ENCODE measurements at regions of chrX and their contacts with region 1.

Region 1: DNA sequence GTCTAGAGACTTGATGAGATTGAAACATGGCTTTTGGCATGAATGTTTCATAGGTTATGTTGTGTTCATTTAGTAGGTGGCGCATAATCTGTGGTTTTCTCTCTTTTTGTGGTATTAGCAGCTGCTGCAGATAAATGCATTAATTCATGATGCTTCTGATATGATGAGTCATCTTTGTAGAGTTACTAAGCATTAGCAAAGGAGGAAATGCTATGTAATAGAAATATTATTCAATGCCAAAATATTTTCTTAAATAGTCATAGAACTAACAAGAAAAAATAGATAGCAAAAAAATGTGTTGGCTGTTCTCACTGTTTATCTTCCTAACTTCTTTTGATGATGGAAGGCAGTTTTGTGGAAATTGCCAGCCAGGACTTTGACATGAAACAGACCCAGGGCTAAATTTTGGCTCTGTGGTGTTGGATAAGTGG is 3.6 kb downstream of the ZXDB start:
- DNase-seq: peak; percentile 30
- H3K4me3 Mint-ChIP-seq: peak overlapping the region; percentile 59
- H3K27ac Mint-ChIP-seq: no peak overlapping the region
- H3K4me1 Mint-ChIP-seq: peaks cover 30% of the 10 kb centered on the region
- H3K27me3 Mint-ChIP-seq: peaks cover 12% of the 10 kb centered on the region
- CTCF ChIP-seq: no peak

Region 2: GRCh38 chrX:57286507-57287251 is 308.7 kb before region 1 on chrX and contains the start of gene FAAH2:
- CTCF ChIA-PET with region 1: no interaction called
- POLR2A ChIA-PET with region 1: no interaction called
- intact Hi-C with region 1: loop called (anchors 10 kb)
- DNase-seq: peak; percentile 89
- H3K4me3 Mint-ChIP-seq: peak within 1 kb of the TSS; percentile 89
- H3K27ac Mint-ChIP-seq: peak within 1 kb of the TSS; percentile 89
- H3K4me1 Mint-ChIP-seq: peaks cover 16% of the 10 kb centered on the region
- H3K27me3 Mint-ChIP-seq: peaks cover 47% of the 10 kb centered on the region
- CTCF ChIP-seq: no peak
- total RNA-seq, gene FAAH2: 1.7 and 3.1 TPM in 2 replicates

Region 3: DNA sequence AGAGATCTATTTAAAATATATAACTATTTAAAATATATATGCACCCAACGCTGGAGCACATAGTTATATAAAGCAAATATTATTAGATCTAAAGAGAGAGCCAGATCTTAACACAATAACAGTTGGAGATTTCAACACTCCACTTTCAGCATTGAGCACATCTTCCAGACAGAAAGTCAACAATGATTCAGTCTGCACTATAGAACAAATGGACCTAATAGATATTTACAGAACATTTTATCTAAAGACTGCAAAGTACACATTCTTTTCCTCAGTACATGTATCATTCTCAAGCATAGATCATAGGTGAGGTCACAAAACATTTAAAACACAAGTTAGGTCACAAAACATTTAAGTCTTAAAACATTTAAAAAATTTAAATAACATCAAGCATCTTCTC is 48.3 kb after region 1 on chrX:
- CTCF ChIA-PET with region 1: interaction called, 3 read pairs
- POLR2A ChIA-PET with region 1: no interaction called
- intact Hi-C with region 1: loop called (anchors 10 kb)
- DNase-seq: peak; percentile 9
- H3K4me3 Mint-ChIP-seq: no peak overlapping the region
- H3K27ac Mint-ChIP-seq: no peak overlapping the region
- H3K4me1 Mint-ChIP-seq: peaks cover 19% of the 10 kb centered on the region
- H3K27me3 Mint-ChIP-seq: no peaks in the 10 kb centered on the region
- CTCF ChIP-seq: no peak

Measured in MCF 10A (cell line).